Right ventricle myocardium superior (tissue), 1 donor: ENCODE measurements at regions of chr10 and their contacts with region 1.

Region 1: GRCh38 chr10:15097011-15097812 is at the start of gene RPP38:
- DNase-seq: peak; percentile 98
- ATAC-seq: peak; percentile 99
- total RNA-seq, gene RPP38: 9.2 TPM

Region 2: GRCh38 chr10:14959276-14960057 is 137.7 kb before region 1 on chr10 and contains the start of gene MEIG1:
- intact Hi-C with region 1: loop called (anchors 10 kb)
- DNase-seq: peak; percentile 94
- ATAC-seq: peak; percentile 99
- total RNA-seq, gene MEIG1: not detected